ENCODE measurements at regions of chr17 and their contacts with region 1.

Region 1: DNA sequence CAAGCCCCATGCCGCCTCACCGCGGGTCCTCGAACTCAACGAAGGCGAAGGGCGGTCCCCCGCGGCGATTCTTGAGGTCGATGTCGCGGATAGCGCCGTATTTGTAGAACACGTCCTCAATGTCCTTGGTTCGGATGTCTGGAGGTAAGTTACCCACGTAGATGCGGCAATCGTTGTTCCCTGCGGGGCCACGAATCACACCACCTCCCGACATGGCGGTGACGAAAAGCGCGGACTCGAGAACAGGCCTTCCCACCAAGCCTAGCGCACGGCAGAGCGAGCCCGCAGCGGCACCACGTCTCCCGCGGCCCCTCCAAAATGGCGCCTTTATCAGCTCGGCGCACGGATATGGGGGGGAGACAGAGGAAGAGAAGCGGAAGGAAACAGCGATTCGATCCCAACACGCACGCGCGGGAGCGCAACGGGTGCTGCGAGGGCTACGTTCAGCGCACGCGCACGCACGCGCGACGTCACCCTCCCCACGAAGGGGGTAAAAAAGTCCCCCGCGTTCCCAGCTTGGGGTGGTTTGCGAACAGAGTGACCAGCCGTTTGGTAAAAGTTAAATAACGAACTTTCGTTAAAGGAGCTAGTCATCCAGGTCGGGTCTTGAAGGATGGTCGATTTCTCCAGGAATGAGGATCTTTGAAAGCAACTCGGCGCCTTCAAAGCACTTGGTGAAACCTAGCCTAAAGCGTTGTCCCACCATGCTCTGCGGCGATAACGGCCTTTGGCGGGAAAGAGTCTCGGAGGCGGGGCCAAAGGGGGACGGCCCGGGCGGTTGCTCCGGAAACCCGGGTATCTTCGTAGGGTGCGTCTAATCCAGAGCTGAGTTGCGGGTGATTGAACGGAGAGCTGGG is at the start of gene SRSF1:
- DNase-seq: peak; percentile 93

Region 2: DNA sequence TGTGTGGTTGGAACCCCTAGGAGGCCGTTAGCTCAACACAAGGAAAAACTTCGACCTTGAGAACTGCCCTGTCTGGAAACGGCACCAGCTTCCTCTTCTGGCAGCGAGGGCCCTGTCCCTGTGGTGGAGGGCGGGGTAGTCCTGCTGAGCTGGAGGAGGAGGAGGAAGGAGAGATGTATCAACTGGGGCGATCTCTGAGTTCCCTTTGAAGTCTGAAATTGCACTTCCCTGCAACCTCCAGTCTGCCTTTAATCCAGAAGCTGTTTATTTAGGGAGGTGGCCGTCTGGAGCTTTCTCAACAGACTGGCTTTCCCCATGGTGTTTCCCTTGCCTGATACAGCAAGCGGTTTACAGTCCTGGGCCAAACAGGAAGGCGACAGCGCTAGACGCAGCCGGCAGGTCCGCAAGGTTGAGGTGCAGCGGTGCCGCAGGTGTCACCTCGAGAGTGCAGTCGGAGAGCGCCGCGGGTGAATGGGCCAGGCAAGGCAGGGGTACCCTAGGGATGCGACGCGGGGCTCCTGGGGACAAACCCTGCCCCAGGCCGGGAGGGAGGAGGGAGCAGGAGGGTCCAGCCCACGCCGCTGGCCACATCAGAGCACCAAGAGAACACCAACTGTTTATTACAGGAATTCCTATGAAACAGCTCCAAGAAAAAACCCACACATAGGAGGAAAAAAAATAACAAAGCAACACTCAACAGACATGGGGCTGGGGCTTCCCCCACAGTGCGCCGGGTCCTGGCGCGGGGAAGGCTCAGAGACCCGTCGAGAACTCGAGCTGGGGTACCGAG is 146.0 kb before region 1 on chr17:
- CTCF ChIA-PET with region 1: no interaction called
- POLR2A ChIA-PET with region 1: interaction called, 11 read pairs
- DNase-seq: no peak

Region 3: DNA sequence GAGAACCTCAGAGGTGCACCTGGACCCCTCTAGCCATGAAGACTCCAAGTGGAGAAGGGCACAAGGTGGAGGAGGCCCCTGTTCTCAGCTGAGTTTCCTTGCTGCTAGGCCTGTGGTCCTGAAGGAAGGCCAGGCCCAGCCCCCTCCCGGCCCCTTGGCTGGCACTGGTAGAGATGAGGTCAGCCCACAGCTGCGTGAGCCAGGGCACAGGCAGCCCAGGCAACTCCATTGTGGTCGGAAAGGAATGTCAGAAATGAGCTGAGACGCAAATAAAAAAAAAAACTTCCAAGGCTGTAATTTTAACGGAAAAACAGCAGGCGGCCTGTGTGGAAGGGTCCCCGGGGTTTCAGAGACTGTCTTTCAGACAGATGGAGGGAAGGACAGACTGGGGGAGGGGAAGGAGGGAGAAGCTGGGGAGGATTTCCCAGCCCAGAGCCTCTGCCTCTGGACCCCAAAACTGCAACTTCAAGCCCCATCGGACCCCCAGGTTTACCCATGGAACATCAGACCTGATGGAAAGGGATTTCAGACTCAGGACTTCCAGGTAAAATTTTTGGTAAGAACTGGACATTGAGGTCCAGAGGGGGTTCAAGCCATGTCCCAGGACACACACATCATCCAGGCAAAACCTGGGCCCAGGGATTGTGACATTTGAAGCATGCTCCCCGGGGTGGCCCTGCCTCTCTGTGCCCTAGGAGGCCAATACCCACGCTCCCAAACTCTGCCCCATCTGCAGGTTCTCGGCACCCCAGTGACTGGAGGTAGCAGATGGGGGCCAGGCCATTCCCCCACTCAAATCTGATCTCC is 131.6 kb before region 1 on chr17:
- CTCF ChIA-PET with region 1: no interaction called
- POLR2A ChIA-PET with region 1: interaction called, 27 read pairs
- DNase-seq: peak; percentile 66

Region 4: GRCh38 chr17:57995076-57995956 is 11.8 kb before region 1 on chr17:
- CTCF ChIA-PET with region 1: interaction called, 5 read pairs
- POLR2A ChIA-PET with region 1: interaction called, 42 read pairs
- DNase-seq: peak; percentile 66

Region 5: DNA sequence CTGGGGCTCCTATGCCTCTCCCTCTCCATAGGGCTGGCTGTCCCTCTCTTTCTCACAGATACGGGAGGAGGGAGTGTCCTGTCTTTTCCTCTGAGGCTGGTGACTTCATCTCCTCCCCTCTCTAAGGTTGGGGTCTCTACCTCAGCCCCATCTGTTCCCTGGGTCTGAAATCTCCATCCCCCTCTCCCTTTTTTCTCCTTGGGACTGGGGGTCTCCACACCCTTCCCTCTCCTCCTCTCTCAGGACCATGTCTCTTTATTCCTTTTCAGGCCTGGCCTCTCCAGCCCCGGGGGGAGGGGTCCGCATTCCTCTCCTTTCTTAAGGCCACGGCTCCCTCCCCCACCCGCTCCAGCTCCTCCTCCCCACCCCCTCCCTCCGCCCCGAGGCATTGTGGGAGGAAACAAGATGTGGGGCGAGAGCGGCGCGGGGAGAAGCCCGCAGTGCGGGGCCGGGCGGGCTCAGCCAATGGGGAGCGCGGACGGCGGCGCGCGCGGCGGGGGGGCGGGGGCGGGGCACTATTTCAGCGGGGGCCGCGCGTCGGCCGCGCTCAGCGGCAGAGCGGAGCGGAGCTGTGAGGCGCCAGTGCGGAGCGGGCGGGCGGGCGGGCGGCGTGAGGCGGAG is 75.8 kb after region 1 on chr17 and contains the start of gene DYNLL2:
- CTCF ChIA-PET with region 1: interaction called, 4 read pairs
- POLR2A ChIA-PET with region 1: interaction called, 33 read pairs
- DNase-seq: peak; percentile 99

Region 6: DNA sequence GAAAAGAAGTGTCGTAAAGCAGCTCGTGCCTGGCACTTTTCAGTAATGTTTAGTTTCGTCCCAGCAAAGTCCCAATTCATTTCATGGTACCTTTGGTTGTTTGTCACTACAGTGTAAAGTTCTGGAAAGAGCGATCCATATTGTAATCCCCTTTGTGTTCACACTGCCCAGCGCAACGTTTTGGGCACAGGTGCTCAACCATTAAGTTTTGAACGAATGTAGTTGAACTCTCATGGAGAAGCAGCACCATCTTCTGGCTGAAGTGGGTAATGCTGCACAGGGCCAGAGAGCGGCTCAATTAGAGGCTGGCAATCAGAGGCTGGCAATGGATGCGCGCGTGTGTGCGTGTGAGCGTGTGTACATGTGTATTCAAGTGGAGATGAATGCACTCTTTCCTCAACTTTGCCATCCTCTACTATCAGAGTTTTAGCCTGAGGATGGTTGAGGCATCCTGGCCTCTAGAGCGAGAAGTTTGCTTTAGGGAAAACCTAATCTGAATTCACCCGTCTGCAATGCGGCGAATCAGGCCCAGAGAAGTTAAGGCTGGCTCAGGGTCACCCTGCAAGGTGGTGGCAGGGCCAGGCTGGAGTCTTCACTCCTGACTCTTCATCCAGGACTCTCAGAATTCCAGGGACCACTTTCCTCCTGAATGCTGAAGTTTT is 105.9 kb after region 1 on chr17:
- CTCF ChIA-PET with region 1: no interaction called
- POLR2A ChIA-PET with region 1: interaction called, 18 read pairs
- DNase-seq: peak; percentile 78